Colonic mucosa (tissue), 4 donors: ENCODE measurements at regions of chr1 and their contacts with region 1.

Region 1: GRCh38 chr1:109112652-109113285 is 1.1 kb upstream of the ELAPOR1 start:
- DNase-seq: peak; percentile 97
- H3K4me3 ChIP-seq: no peak overlapping the region
- H3K27ac ChIP-seq: no peak overlapping the region
- H3K4me1 ChIP-seq: peaks cover 7% of the 10 kb centered on the region
- H3K27me3 ChIP-seq: no peaks in the 10 kb centered on the region
- CTCF ChIP-seq: peak; percentile 97

Region 2: GRCh38 chr1:109193653-109194590 is 81.2 kb after region 1 on chr1:
- intact Hi-C with region 1: loop called (anchors 5 kb)
- DNase-seq: peak; percentile 74
- H3K4me3 ChIP-seq: no peak overlapping the region
- H3K27ac ChIP-seq: no peak overlapping the region
- H3K4me1 ChIP-seq: no peaks in the 10 kb centered on the region
- H3K27me3 ChIP-seq: no peaks in the 10 kb centered on the region
- CTCF ChIP-seq: peak; percentile 72